Body of pancreas (tissue), 4 donors: ENCODE measurements at regions of chr14 and their contacts with region 1.

Region 1: DNA sequence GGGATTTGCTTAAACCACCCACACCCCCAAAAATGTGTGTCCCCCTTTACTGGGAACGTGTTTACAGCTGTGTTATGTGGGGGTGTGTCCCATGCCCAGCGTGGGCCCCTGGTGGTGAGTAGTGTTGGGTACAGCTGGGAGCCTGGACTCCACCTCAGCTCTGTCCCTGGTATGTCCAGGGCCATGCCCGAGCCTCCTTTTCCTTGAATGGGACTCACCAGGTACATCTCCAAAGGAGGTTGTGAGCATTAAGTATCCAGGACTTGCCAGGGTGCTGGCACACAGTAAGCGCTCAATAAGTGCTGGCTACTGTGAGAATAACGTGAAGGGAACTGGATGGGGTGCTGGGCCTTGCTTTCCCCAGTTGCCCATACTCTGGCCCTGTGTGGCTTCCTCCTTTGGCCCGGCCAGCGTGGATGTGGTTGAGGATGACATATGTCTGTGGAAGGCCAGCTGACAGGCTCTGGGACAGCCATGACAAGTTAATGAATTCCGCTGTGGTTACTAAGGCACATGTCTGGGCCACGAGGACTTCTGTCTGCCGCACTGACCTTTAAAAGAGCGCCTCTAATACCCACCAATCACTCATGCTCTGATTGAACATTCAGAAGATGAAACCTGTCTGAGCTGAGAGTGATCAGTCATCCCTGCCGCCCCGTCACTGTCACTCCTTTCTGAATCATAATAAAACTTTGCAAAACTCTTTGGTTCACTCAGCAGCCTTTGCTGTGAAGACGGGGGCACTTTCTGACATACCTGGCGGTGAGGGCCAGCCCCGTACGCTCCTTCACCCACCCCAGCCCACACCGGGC is 74.7 kb downstream of the DIO3 start:
- DNase-seq: no peak
- ATAC-seq: no peak
- H3K4me3 ChIP-seq: no peak overlapping the region
- H3K27ac ChIP-seq: no peak overlapping the region
- H3K4me1 ChIP-seq: no peaks in the 10 kb centered on the region
- H3K27me3 ChIP-seq: no peaks in the 10 kb centered on the region
- CTCF ChIP-seq: no peak
- POLR2A ChIP-seq: no peak

Region 2: GRCh38 chr14:100654814-100655740 is 980.9 kb before region 1 on chr14:
- intact Hi-C with region 1: loop called (anchors 10 kb)
- DNase-seq: peak; percentile 51 to 72 (median 68)
- ATAC-seq: peak; percentile 61
- H3K4me3 ChIP-seq: no peak overlapping the region
- H3K27ac ChIP-seq: no peak overlapping the region
- H3K4me1 ChIP-seq: peaks cover 35% of the 10 kb centered on the region
- H3K27me3 ChIP-seq: no peaks in the 10 kb centered on the region
- CTCF ChIP-seq: peak; percentile 61 to 83 (median 78)
- POLR2A ChIP-seq: no peak

Region 3: GRCh38 chr14:100850841-100851585 is 784.9 kb before region 1 on chr14:
- intact Hi-C with region 1: loop called (anchors 5 kb)
- DNase-seq: peak; percentile 81 to 89 (median 82)
- ATAC-seq: peak; percentile 84
- H3K4me3 ChIP-seq: no peak overlapping the region
- H3K27ac ChIP-seq: no peak overlapping the region
- H3K4me1 ChIP-seq: no peaks in the 10 kb centered on the region
- H3K27me3 ChIP-seq: no peaks in the 10 kb centered on the region
- CTCF ChIP-seq: peak; percentile 80 to 88 (median 85)
- POLR2A ChIP-seq: no peak

Region 4: DNA sequence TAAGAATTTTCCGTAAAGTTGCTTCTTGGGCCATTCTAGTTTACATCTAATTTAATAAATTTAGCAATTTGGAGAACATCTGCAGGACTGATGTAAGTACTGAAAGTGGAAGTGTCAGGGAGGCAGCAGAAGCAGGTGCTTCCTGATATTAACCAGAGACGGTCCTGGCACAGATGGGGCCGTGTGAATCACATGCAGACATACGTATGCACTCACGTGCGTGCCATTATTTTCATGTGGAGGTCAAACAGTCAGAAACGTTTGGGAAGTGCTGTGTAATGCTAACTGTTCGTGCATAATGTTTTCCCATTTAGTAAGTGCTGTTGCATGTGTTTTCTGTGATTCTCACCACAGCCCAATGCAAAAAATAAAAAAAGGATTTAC is 240.6 kb after region 1 on chr14:
- intact Hi-C with region 1: no loop called
- DNase-seq: peak; percentile 29 to 84 (median 48)
- ATAC-seq: no peak
- H3K4me3 ChIP-seq: no peak overlapping the region
- H3K27ac ChIP-seq: peak overlapping the region in 2 of 4 donors; percentile 80 to 84
- H3K4me1 ChIP-seq: peaks cover 72% of the 10 kb centered on the region
- H3K27me3 ChIP-seq: no peaks in the 10 kb centered on the region
- CTCF ChIP-seq: no peak
- POLR2A ChIP-seq: no peak